Psoas muscle (tissue), 8 donors: ENCODE measurements at regions of chr14 and their contacts with region 1.

Region 1: DNA sequence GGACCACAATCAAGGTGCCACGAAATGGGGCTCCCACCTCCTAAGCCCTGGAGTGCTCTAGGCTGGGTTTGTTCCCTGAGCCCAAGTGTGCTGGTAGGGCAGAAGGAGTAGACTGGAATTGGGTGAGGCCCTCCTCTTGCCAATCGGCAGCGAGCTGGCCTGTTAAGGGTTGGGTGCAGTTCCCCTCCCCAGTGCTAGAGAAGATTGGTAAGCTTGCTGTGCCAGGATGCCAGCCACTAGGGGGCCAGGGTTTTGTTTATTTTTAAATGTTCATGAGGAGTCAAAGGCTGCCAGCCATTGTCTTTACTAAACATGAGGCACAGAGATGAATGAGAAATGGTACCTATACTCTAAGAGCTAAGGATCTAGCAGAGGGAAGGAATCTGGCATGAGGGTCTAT is 79.7 kb downstream of the SPTB start:
- DNase-seq: no peak
- ATAC-seq: peak; percentile 21 to 75 (median 56)
- H3K4me3 ChIP-seq: no peak overlapping the region
- H3K27ac ChIP-seq: peak overlapping the region; percentile 39
- H3K4me1 ChIP-seq: no peaks in the 10 kb centered on the region
- H3K27me3 ChIP-seq: no peaks in the 10 kb centered on the region
- CTCF ChIP-seq: peak; percentile 55

Region 2: DNA sequence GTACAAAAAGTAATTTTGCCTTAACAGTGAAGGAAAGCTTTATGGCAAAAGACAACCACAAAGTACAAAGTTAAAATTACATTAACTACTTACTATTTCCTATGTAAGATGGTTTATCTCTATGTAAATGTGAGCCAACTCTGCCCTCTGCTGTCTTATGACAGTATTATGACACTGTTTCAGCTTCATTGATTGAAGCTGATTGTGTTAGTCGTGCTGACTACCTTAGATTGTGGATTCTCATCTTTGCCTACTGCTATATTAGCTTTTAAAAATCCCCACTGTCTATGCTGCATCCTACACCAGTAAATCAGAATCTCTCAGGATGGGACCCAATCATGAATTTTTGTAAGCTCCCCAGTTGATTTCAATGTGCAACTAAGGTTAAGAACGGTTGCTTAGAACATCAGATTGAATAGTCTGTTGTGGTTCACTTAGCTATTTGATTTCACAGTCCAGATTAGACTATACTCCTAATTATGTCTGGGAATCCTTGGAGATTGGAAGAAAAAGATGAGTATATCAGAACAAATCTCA is 91.9 kb after region 1 on chr14:
- intact Hi-C with region 1: loop called in 1 of 2 experiments (anchors 5 kb)
- DNase-seq: no peak
- ATAC-seq: peak; percentile 94 to 98 (median 95)
- H3K4me3 ChIP-seq: no peak overlapping the region
- H3K27ac ChIP-seq: peak overlapping the region; percentile 13
- H3K4me1 ChIP-seq: peaks cover 9% of the 10 kb centered on the region
- H3K27me3 ChIP-seq: no peaks in the 10 kb centered on the region
- CTCF ChIP-seq: peak; percentile 72